Mammary epithelial cell (primary cell): ENCODE measurements at regions of chr10 and their contacts with region 1.

Region 1: GRCh38 chr10:31940839-31941653 is 12.4 kb upstream of the ARHGAP12 start:
- DNase-seq: peak; percentile 98
- H3K4me3 ChIP-seq: peak overlapping the region in 1 of 3 experiments; percentile 9
- H3K27ac ChIP-seq: peak overlapping the region; percentile 99
- H3K4me1 ChIP-seq: peaks cover 50% of the 10 kb centered on the region
- H3K27me3 ChIP-seq: no peaks in the 10 kb centered on the region
- CTCF ChIP-seq: no peak

Region 2: DNA sequence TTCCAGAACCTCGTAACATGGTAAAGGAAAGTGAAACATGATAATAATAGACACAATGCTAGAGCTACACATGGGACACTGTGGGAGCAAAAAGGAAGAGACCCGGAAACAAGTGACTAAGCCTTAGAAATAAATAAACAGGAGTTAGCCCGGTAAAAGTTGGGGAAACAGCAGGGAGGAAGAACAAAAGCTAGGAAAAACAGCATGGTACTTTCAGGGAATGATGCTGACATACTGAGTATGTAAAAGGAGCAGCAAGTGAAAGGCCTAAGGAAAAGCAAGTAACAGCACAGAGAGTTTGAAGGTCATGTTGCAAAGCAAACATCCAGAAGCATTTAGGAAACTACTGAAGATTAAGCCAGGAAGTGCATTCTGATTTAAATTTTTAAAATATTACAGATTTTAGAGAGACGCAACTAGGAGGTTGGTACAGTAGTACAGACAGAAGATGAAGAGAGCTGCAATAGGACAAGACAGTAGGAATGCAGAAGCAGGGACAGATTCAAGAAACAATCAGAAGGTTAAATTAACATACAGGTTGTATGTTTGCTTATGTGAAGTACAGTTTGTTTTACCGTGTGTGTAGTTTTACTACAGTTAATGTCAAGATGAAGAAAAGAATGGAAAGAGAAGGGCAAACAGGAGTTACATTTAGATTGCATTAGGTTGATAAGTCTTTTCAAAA is 76.1 kb before region 1 on chr10:
- CTCF ChIA-PET with region 1: interaction called, 10 read pairs
- dilution Hi-C with region 1: no loop called
- in situ Hi-C with region 1: loop called in 1 of 2 experiments (anchors 10 kb)
- intact Hi-C with region 1: no loop called
- DNase-seq: no peak
- H3K4me3 ChIP-seq: no peak overlapping the region
- H3K27ac ChIP-seq: no peak overlapping the region
- H3K4me1 ChIP-seq: peaks cover 6% of the 10 kb centered on the region
- H3K27me3 ChIP-seq: no peaks in the 10 kb centered on the region
- CTCF ChIP-seq: no peak

Region 3: DNA sequence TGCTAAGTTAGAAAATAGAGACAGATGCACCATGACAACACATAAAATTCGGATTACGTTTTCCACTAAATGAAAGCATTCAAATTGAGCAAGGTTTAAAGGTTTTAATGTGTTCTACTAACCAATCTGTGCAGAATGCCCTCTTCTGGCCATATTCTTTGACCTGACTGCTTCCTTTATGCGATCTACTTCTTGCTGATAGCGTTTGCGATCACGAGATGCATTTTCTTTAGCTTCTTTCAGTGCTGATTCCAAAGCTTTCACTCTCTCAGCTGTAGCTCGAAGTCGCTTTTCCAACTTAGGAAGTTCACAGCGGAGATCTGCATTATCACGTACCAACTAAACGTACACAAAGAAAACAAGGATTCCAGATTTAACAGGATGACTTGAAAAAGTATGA is 76.0 kb after region 1 on chr10:
- CTCF ChIA-PET with region 1: no interaction called
- dilution Hi-C with region 1: no loop called
- in situ Hi-C with region 1: no loop called
- intact Hi-C with region 1: no loop called
- DNase-seq: no peak
- H3K4me3 ChIP-seq: no peak overlapping the region
- H3K27ac ChIP-seq: no peak overlapping the region
- H3K4me1 ChIP-seq: no peaks in the 10 kb centered on the region
- H3K27me3 ChIP-seq: no peaks in the 10 kb centered on the region
- CTCF ChIP-seq: no peak

Region 4: DNA sequence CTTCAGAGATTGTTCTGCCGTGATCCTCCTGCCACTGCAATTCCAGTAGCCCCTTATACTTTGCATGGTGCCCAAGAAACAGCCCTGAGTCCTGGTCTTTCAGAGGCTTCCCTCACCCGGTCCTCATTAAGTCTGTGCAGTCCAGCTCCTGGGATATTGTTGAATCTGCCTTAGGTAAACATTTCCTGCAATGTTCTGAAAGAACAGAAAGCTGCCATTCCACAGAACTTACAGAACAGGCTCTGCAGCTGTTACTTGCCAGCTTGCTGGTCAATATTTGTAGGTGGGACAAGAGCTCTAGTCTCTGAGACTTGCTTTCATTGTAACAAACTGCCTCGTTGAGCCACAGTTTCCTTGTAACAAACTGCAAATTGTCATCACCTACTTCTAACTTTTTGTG is 230.2 kb after region 1 on chr10:
- CTCF ChIA-PET with region 1: no interaction called
- dilution Hi-C with region 1: no loop called
- in situ Hi-C with region 1: no loop called
- intact Hi-C with region 1: no loop called
- DNase-seq: no peak
- H3K4me3 ChIP-seq: no peak overlapping the region
- H3K27ac ChIP-seq: no peak overlapping the region
- H3K4me1 ChIP-seq: no peaks in the 10 kb centered on the region
- H3K27me3 ChIP-seq: no peaks in the 10 kb centered on the region
- CTCF ChIP-seq: no peak